ENCODE measurements at regions of chr4 and their contacts with region 1.

Region 1: DNA sequence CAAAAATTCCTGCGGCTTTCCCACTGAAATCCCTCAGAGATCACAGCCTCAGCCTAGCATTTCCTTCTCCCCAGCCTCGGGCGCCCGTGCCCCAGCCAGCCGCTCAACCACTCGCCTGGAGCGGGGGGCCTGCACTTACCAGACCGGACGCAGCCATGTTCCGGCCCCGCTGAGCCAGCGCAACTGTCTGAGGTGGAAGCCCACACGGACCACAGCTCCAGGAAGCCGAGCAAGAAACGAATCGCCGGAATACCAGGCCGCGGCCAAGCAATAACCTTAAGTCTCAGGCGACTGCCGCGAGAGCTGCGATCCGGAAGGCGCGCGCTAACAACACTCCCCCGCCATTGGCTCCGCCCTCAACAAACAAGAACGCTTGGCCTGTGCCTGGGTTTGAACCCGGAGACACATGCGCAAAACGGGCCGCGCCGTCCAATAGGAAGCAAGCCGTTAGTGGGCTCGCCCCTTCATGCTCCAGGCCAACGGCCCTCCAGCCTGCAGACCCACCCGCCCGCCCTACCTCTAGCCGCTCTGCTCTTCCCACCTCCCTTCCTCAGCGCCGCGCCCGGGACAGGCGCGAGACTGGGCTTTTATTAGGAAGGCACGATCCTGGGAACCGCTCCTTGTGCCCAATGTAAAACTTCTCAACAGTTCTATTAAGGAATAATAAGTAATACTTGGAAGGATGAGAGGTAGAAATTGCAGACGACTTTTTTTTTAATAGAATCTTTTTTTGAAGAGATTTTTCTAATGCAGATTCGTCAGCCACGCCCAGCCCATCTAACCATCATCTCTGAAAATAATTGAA is at the start of gene CENPC:
- DNase-seq: peak; percentile 96
- H3K4me3 ChIP-seq: peak within 1 kb of the TSS; percentile 64 to 91 (median 88)
- H3K27ac ChIP-seq: peak within 1 kb of the TSS; percentile 92
- H3K4me1 ChIP-seq: peaks cover 7% of the 10 kb centered on the region
- H3K27me3 ChIP-seq: no peaks in the 10 kb centered on the region
- CTCF ChIP-seq: no peak
- total RNA-seq, gene CENPC: 12.3 to 13.0 TPM

Region 2: GRCh38 chr4:67288964-67289363 is 256.4 kb before region 1 on chr4:
- CTCF ChIA-PET with region 1: no interaction called
- dilution Hi-C with region 1: no loop called
- in situ Hi-C with region 1: no loop called
- intact Hi-C with region 1: no loop called
- DNase-seq: no peak
- H3K4me3 ChIP-seq: no peak overlapping the region
- H3K27ac ChIP-seq: no peak overlapping the region
- H3K4me1 ChIP-seq: no peaks in the 10 kb centered on the region
- H3K27me3 ChIP-seq: no peaks in the 10 kb centered on the region
- CTCF ChIP-seq: peak; percentile 26 to 40

Region 3: DNA sequence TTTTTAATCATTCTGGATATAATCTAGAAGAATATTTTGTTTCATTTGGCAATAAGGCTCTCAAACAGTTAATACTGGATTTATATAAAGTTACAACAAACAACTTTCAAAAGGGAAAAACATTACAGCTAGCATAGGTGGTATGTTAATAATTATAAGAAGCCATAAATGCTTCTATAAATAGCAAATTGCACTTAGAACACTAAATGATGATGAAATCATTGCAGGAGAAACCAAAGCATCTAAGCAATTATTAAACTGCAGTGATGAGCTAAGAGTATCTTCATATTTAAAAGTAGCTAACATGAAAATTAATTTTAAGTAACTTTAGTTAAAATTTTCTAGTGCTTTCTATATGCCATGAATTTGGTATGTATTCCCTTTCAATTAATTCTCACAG is 189.6 kb before region 1 on chr4:
- CTCF ChIA-PET with region 1: no interaction called
- dilution Hi-C with region 1: no loop called
- in situ Hi-C with region 1: no loop called
- intact Hi-C with region 1: no loop called
- DNase-seq: no peak
- H3K4me3 ChIP-seq: no peak overlapping the region
- H3K27ac ChIP-seq: no peak overlapping the region
- H3K4me1 ChIP-seq: no peaks in the 10 kb centered on the region
- H3K27me3 ChIP-seq: no peaks in the 10 kb centered on the region
- CTCF ChIP-seq: no peak

Region 4: GRCh38 chr4:67499799-67500198 is 45.6 kb before region 1 on chr4:
- CTCF ChIA-PET with region 1: no interaction called
- dilution Hi-C with region 1: no loop called
- in situ Hi-C with region 1: no loop called
- intact Hi-C with region 1: no loop called
- DNase-seq: no peak
- H3K4me3 ChIP-seq: no peak overlapping the region
- H3K27ac ChIP-seq: no peak overlapping the region
- H3K4me1 ChIP-seq: no peaks in the 10 kb centered on the region
- H3K27me3 ChIP-seq: no peaks in the 10 kb centered on the region
- CTCF ChIP-seq: no peak

Region 5: GRCh38 chr4:67624939-67625338 is 79.5 kb after region 1 on chr4:
- CTCF ChIA-PET with region 1: no interaction called
- dilution Hi-C with region 1: no loop called
- in situ Hi-C with region 1: no loop called
- intact Hi-C with region 1: loop called (anchors 5 kb)
- DNase-seq: no peak
- H3K4me3 ChIP-seq: no peak overlapping the region
- H3K27ac ChIP-seq: no peak overlapping the region
- H3K4me1 ChIP-seq: no peaks in the 10 kb centered on the region
- H3K27me3 ChIP-seq: no peaks in the 10 kb centered on the region
- CTCF ChIP-seq: no peak

Region 6: DNA sequence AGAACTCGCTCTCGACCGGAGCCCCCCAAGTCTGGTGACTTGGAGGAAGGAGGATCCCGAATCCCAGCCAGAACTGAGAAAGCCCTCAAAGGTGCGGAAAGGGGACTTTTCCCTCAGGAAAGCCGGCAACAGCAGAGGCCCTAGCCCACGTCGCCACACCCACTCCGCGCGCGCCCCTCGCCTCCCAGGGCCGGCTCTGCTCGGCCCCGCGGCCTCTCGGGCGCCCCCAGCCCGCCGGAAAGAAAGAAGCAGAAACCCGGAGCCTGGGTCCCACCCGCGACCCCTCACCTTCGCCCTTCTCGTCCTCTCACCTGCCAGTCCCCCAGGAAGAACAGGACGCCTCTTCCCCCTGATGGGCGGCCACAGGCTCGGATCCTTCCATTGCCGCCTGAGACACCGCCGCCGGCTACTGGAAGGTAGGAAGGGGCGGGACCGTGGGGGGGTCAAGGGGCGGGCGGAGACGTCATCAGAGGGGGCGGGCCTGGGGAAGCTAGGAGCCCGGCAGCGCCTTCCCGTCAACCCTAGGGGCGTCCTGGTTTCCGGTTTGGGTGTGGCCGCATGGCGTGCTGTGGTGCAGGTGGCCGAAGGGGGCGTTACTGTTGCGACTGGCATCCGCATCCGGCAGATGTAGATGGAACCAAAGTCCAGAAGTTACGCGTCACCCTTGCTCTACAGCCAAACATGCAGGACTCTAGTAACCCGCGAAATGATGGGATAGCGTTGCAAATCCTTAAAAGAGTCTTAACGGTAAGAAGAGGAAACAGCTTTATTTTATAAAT is 155.5 kb after region 1 on chr4 and contains the start of gene UBA6:
- CTCF ChIA-PET with region 1: no interaction called
- dilution Hi-C with region 1: no loop called
- in situ Hi-C with region 1: no loop called
- intact Hi-C with region 1: loop called (anchors 5 kb)
- DNase-seq: peak; percentile 96
- H3K4me3 ChIP-seq: peak within 1 kb of the TSS; percentile 68 to 88 (median 86)
- H3K27ac ChIP-seq: peak within 1 kb of the TSS; percentile 96
- H3K4me1 ChIP-seq: peaks cover 18% of the 10 kb centered on the region
- H3K27me3 ChIP-seq: no peaks in the 10 kb centered on the region
- CTCF ChIP-seq: peak in 1 of 2 donors; percentile 50
- total RNA-seq, gene UBA6: 178 to 203 TPM

Region 7: GRCh38 chr4:67909905-67910584 is 364.6 kb after region 1 on chr4:
- CTCF ChIA-PET with region 1: no interaction called
- dilution Hi-C with region 1: no loop called
- in situ Hi-C with region 1: no loop called
- intact Hi-C with region 1: loop called (anchors 5 kb)
- DNase-seq: peak; percentile 17
- H3K4me3 ChIP-seq: no peak overlapping the region
- H3K27ac ChIP-seq: no peak overlapping the region
- H3K4me1 ChIP-seq: no peaks in the 10 kb centered on the region
- H3K27me3 ChIP-seq: no peaks in the 10 kb centered on the region
- CTCF ChIP-seq: peak; percentile 54 to 71

Measured in mammary epithelial cell (primary cell).